CD8-positive, alpha-beta T cell (primary cell): ENCODE measurements at regions of chrX and their contacts with region 1.

Region 1: GRCh38 chrX:30735839-30736238 is 82.6 kb downstream of the GK start:
- DNase-seq: peak; percentile 23 to 70 (median 59)
- ATAC-seq: peak; percentile 69
- H3K4me3 ChIP-seq: no peak overlapping the region
- H3K4me3 Mint-ChIP-seq: no peak overlapping the region
- H3K27ac ChIP-seq: no peak overlapping the region
- H3K27ac Mint-ChIP-seq: no peak overlapping the region
- H3K4me1 ChIP-seq: no peaks in the 10 kb centered on the region
- H3K4me1 Mint-ChIP-seq: peaks cover 2% of the 10 kb centered on the region
- H3K27me3 ChIP-seq: no peaks in the 10 kb centered on the region
- H3K27me3 Mint-ChIP-seq: no peaks in the 10 kb centered on the region
- CTCF ChIP-seq: peak; percentile 70

Region 2: GRCh38 chrX:30822068-30822681 is 86.3 kb after region 1 on chrX:
- CTCF ChIA-PET with region 1: no interaction called
- POLR2A ChIA-PET with region 1: no interaction called
- intact Hi-C with region 1: loop called in 1 of 2 experiments (anchors 10 kb)
- DNase-seq: no peak
- ATAC-seq: no peak
- H3K4me3 ChIP-seq: no peak overlapping the region
- H3K4me3 Mint-ChIP-seq: no peak overlapping the region
- H3K27ac ChIP-seq: no peak overlapping the region
- H3K27ac Mint-ChIP-seq: no peak overlapping the region
- H3K4me1 ChIP-seq: peaks cover 15% of the 10 kb centered on the region
- H3K4me1 Mint-ChIP-seq: peaks cover 20% of the 10 kb centered on the region
- H3K27me3 ChIP-seq: no peaks in the 10 kb centered on the region
- H3K27me3 Mint-ChIP-seq: peaks cover 2% of the 10 kb centered on the region
- CTCF ChIP-seq: no peak

Region 3: GRCh38 chrX:30865015-30865414 is 129.2 kb after region 1 on chrX:
- CTCF ChIA-PET with region 1: interaction called, 4 read pairs
- POLR2A ChIA-PET with region 1: no interaction called
- intact Hi-C with region 1: loop called in 1 of 2 experiments (anchors 10 kb)
- DNase-seq: peak in 2 of 9 experiments; percentile 13 to 31
- ATAC-seq: peak; percentile 36
- H3K4me3 ChIP-seq: no peak overlapping the region
- H3K4me3 Mint-ChIP-seq: no peak overlapping the region
- H3K27ac ChIP-seq: no peak overlapping the region
- H3K27ac Mint-ChIP-seq: no peak overlapping the region
- H3K4me1 ChIP-seq: no peaks in the 10 kb centered on the region
- H3K4me1 Mint-ChIP-seq: peaks cover 2% of the 10 kb centered on the region
- H3K27me3 ChIP-seq: no peaks in the 10 kb centered on the region
- H3K27me3 Mint-ChIP-seq: no peaks in the 10 kb centered on the region
- CTCF ChIP-seq: no peak

Region 4: DNA sequence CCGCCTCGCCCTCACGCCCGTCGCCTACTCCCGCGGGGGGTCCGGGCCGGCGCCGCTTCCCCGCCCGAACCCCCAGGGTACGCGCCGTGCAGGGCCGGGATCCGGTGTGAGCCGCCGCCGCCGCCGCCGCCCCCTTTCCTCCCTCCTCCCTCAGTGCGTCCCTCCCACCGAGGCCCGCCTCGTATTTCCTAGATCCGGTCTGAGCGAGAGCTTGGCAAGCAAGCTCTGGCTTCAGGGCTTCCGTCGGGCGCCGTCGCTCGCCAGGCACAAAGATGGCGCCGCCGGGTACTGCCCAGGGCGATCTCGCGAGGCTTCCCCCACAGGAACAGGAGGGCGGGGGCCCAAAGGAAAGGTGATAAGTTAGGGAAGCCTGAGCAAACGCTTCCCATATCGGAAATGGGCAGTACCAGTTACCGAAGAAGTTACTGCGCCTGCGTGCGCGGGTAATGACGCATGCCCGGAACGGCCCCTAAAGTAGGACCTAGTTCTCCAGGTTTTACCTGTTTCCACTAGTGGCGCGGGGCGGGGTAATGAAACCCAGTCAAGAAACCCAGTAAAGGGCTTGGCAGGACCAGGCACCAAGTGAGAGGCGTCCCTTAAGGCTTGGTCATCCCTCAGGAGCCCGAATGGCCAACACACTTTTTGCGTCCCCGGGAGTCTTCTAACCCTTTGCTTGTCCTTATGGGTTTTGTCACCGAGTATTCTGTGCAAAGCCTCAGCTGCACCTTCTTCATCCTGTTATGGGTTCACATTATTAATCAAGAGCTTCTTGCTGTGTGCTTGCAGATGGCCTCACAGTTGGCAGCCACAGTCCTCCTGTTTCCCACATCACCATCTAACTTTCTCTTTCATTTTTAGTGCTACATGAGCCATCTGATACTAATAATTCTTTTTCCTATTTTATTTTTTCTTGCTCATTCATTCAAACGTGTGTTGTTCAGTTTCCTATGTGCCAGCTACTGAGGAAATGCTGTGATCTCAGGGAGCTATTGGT is 153.6 kb after region 1 on chrX and contains the start of gene TAB3:
- CTCF ChIA-PET with region 1: no interaction called
- POLR2A ChIA-PET with region 1: no interaction called
- intact Hi-C with region 1: loop called in 1 of 2 experiments (anchors 10 kb)
- DNase-seq: peak; percentile 85 to 96 (median 92)
- ATAC-seq: peak; percentile 90
- H3K4me3 ChIP-seq: peak within 1 kb of the TSS; percentile 61 to 70
- H3K4me3 Mint-ChIP-seq: peak within 1 kb of the TSS; percentile 91
- H3K27ac ChIP-seq: peak within 1 kb of the TSS; percentile 83 to 87
- H3K27ac Mint-ChIP-seq: peak within 1 kb of the TSS; percentile 95
- H3K4me1 ChIP-seq: peaks cover 20% of the 10 kb centered on the region
- H3K4me1 Mint-ChIP-seq: peaks cover 39% of the 10 kb centered on the region
- H3K27me3 ChIP-seq: no peaks in the 10 kb centered on the region
- H3K27me3 Mint-ChIP-seq: no peaks in the 10 kb centered on the region
- CTCF ChIP-seq: no peak
- total RNA-seq, gene TAB3: 21.5 to 25.9 TPM

Region 5: GRCh38 chrX:31661280-31661679 is 925.4 kb after region 1 on chrX:
- CTCF ChIA-PET with region 1: no interaction called
- POLR2A ChIA-PET with region 1: no interaction called
- intact Hi-C with region 1: loop called in 1 of 2 experiments (anchors 5 kb)
- DNase-seq: no peak
- ATAC-seq: no peak
- H3K4me3 ChIP-seq: no peak overlapping the region
- H3K4me3 Mint-ChIP-seq: no peak overlapping the region
- H3K27ac ChIP-seq: no peak overlapping the region
- H3K27ac Mint-ChIP-seq: no peak overlapping the region
- H3K4me1 ChIP-seq: no peaks in the 10 kb centered on the region
- H3K4me1 Mint-ChIP-seq: no peaks in the 10 kb centered on the region
- H3K27me3 ChIP-seq: no peaks in the 10 kb centered on the region
- H3K27me3 Mint-ChIP-seq: no peaks in the 10 kb centered on the region
- CTCF ChIP-seq: no peak